ENCODE measurements at regions of chr19 and their contacts with region 1.

Region 1: DNA sequence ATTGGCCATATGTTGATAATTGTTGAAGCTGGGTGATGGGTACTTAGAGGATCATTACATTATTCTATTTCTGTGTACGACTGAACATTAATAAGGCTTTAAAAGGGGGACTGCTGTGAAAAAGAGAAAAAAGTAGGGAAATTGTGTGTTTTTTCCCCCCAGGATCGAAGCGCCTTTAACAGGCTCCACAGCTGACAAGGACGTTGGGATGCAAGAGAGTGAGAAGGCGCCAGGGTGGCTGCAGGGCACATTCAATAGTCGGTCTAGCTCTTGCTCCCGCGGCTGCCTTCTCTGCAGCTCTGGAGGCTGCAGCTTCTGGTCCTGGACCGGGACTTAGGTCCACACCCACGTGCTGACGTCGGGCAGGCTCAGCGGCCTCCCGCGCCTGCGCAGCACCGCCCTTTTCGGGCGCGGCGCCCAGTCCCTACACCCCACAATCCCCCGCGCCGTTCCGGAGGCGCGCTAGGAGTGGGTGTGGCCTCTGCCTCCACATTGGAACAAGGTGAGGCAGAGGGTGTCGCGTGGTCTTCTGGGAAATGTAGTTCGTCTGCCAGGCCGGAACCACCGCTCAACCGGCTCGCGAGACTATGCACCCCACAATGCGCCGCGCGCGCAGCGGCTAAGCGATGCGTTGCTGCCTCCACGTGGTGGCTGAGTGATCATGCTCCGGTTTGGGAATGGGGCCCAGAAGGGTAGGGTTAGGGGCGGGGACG is 4.9 kb upstream of the LRFN3 start:
- DNase-seq: peak; percentile 99
- ATAC-seq: peak; percentile 98
- H3K4me3 Mint-ChIP-seq: peak overlapping the region; percentile 76
- H3K27ac Mint-ChIP-seq: peak overlapping the region; percentile 91
- H3K4me1 Mint-ChIP-seq: peaks cover 28% of the 10 kb centered on the region
- H3K27me3 Mint-ChIP-seq: no peaks in the 10 kb centered on the region
- CTCF ChIP-seq: peak; percentile 82

Region 2: DNA sequence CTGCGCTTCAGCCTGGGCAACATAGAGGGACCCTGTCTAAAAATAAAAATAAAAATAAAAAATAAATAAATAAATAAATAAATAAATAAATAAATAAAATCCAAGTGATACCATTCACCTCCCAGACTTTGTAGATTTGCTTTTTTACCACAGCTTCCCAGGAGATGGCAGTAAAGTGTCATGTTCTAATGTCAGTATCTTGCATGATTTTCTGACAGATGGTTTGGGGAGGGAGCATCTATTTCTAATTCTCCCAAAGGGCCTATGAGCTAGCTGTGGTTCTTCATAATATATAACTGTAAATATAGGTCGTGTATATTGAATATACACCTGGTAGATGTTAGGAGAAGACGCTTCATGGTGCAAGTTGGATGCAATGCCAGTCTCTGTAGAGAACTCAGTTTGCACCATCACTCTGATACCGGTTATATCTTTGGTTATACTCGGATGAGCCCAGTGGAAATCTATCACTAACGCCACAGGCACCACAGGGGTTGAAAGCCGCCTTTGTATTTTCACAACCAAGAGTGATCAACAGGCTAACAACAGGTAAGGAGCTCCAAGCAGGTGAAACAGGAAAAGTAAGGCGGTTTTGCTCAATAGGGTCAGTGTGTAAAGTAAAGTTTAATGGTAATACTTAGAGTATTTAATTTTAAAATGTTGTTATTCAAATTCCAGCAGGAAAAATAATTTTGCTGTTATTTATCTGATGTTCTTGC is 49.0 kb before region 1 on chr19:
- CTCF ChIA-PET with region 1: interaction called, 88 read pairs
- POLR2A ChIA-PET with region 1: interaction called, 13 read pairs
- intact Hi-C with region 1: loop called (anchors 1 kb)
- DNase-seq: peak; percentile 54
- ATAC-seq: peak; percentile 52
- H3K4me3 Mint-ChIP-seq: no peak overlapping the region
- H3K27ac Mint-ChIP-seq: no peak overlapping the region
- H3K4me1 Mint-ChIP-seq: peaks cover 5% of the 10 kb centered on the region
- H3K27me3 Mint-ChIP-seq: peaks cover 15% of the 10 kb centered on the region
- CTCF ChIP-seq: peak; percentile 72

Region 3: DNA sequence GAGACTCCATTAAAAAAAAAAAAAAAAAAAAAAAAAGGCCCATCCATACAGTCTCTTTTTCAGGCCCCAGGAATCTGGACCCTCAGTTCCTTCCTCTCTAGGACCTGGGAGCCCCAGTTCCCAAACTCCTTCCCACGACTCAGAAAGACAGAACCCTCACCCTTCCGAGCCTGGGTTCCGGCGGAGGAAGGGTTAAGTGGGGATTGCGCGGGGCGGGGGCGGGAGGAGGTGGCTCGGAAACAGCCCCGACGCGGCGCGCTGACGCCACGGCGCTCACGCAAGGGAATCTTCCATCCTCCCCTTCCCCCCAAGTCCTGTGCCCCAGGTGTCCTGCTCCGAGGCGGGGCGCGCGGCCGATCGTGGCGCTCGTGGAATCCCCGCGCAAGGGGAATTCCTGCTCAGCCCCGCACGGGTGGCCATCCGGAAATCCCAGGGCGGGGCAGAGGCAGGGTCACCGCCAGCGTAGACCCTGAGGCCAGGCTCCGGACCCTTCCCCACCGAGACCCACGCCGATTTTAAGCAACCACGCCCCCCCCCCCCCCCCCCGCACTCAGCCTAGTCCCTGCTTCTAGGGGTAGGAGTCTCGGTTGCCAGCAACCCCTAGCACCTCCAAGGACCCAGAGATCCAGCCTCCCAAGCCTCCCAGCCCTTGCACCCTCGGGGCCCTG is 31.6 kb before region 1 on chr19:
- CTCF ChIA-PET with region 1: interaction called, 12 read pairs
- POLR2A ChIA-PET with region 1: interaction called, 4 read pairs
- intact Hi-C with region 1: loop called (anchors 2 kb)
- DNase-seq: peak; percentile 93
- ATAC-seq: peak; percentile 57
- H3K4me3 Mint-ChIP-seq: peak overlapping the region; percentile 86
- H3K27ac Mint-ChIP-seq: peak overlapping the region; percentile 95
- H3K4me1 Mint-ChIP-seq: peaks cover 49% of the 10 kb centered on the region
- H3K27me3 Mint-ChIP-seq: no peaks in the 10 kb centered on the region
- CTCF ChIP-seq: no peak